ENCODE measurements at regions of chr10 and their contacts with region 1.

Region 1: DNA sequence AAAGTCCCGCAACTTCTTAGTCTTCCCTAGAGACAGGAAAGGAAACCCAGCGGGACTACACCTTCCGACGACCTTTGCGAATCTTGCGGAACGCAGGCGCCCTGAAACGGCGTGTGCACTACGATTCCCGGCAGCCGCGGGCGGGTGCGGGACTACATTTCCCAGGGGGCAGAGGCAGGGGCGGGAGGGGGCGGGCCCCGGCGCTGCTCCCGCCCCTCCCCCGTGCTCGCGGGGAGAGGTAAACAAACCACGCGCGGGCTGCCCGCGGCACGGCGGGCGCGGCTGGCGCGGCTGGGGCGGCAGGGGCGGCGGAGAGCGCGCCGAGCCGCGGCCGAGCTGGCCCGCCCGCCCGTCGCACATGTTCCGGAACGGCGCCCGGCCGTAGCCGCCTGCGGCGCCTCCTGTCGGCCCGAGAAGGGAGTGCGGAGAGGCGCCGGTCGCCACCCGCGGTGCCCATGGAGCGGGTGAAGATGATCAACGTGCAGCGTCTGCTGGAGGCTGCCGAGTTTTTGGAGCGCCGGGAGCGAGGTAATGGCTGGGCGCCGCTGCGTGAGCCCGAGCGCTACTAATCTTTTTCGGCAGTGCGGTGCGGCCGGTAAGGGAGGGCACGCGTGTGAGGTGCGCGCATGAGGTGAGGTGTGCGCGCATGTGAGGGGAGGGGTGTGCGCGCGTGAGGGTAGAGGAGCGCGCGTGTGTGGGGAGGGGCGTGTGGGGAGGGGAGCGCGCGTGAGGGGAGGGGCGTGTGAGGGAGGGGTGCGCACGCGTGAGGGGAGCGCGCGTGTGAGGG is 18.5 kb downstream of the MXI1 start:
- DNase-seq: peak; percentile 94
- ATAC-seq: peak; percentile 62 to 78 (median 72)
- H3K4me3 ChIP-seq: peak overlapping the region; percentile 73 to 81 (median 80)
- H3K27ac ChIP-seq: peak overlapping the region; percentile 91 to 97 (median 94)
- H3K4me1 ChIP-seq: peaks cover 0 to 6% (median 0%) of the 10 kb centered on the region in 4 donors
- H3K27me3 ChIP-seq: no peaks in the 10 kb centered on the region
- CTCF ChIP-seq: peak; percentile 52 to 94 (median 69)
- POLR2A ChIP-seq: peak; percentile 54

Region 2: GRCh38 chr10:110093722-110094121 is 132.2 kb before region 1 on chr10:
- intact Hi-C with region 1: no loop called
- DNase-seq: no peak
- ATAC-seq: no peak
- H3K4me3 ChIP-seq: no peak overlapping the region
- H3K27ac ChIP-seq: no peak overlapping the region
- H3K4me1 ChIP-seq: no peaks in the 10 kb centered on the region
- H3K27me3 ChIP-seq: no peaks in the 10 kb centered on the region
- CTCF ChIP-seq: no peak
- POLR2A ChIP-seq: no peak

Region 3: GRCh38 chr10:110279407-110279986 is 53.5 kb after region 1 on chr10:
- intact Hi-C with region 1: loop called in 1 of 2 experiments (anchors 10 kb)
- DNase-seq: peak in 1 of 3 donors; percentile 52
- ATAC-seq: peak; percentile 96 to 98 (median 97)
- H3K4me3 ChIP-seq: peak overlapping the region in 2 of 3 donors; percentile 13 to 33
- H3K27ac ChIP-seq: peak overlapping the region in 2 of 3 donors; percentile 47 to 50
- H3K4me1 ChIP-seq: no peaks in the 10 kb centered on the region
- H3K27me3 ChIP-seq: no peaks in the 10 kb centered on the region
- CTCF ChIP-seq: peak; percentile 75 to 94 (median 82)
- POLR2A ChIP-seq: no peak